CD4-positive, alpha-beta T cell (primary cell): ENCODE measurements at regions of chr9 and their contacts with region 1.

Region 1: GRCh38 chr9:130107234-130107861 is 53.6 kb downstream of the GPR107 start:
- DNase-seq: peak; percentile 71 to 92 (median 84)
- ATAC-seq: peak; percentile 90
- H3K4me3 ChIP-seq: no peak overlapping the region
- H3K4me3 Mint-ChIP-seq: no peak overlapping the region
- H3K27ac ChIP-seq: no peak overlapping the region
- H3K27ac Mint-ChIP-seq: peak overlapping the region; percentile 7
- H3K4me1 ChIP-seq: peaks cover 10% of the 10 kb centered on the region
- H3K4me1 Mint-ChIP-seq: peaks cover 19% of the 10 kb centered on the region
- H3K27me3 ChIP-seq: no peaks in the 10 kb centered on the region
- H3K27me3 Mint-ChIP-seq: no peaks in the 10 kb centered on the region
- CTCF ChIP-seq: peak; percentile 89

Region 2: DNA sequence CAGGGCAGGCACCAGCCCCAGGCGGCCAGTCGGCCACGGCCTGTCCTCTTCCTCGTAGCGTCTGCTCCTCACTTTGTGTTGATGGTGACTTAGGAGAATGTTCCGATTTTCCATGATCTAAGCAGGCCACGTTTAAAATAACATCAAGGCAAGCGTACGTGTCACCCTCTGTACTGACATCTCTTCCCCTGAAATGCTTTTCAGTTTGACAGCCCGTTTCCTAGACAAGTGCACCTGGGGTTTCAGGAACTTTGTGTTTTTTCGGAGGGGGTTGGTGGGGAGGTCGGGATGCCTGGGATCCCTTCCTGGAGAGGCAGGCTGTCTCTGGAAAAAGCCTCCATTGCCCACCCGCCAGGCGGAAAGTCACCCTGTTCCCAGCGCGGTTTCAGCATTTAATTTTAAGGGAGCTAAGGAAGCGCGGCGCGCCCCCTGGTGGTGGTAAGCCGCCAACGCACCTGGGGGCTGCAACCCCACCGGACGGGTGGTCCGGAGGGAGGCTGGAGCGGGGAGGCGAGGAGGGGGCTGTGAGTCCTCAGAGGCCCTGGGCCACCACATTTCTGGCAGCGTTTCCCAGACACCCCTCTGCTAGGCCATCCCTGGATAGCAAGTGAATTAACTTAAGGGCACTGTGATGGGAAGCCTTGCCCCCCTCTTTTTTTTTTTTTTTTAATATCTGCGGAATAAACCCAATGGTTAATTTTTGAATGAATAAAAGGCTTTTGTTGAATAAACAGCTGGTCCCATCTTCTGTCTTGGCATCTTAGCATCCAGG is 128.7 kb after region 1 on chr9:
- CTCF ChIA-PET with region 1: interaction called, 52 read pairs
- POLR2A ChIA-PET with region 1: no interaction called
- intact Hi-C with region 1: loop called (anchors 1 kb)
- DNase-seq: peak; percentile 52 to 82 (median 64)
- ATAC-seq: peak; percentile 40
- H3K4me3 ChIP-seq: no peak overlapping the region
- H3K4me3 Mint-ChIP-seq: peak overlapping the region; percentile 34
- H3K27ac ChIP-seq: no peak overlapping the region
- H3K27ac Mint-ChIP-seq: no peak overlapping the region
- H3K4me1 ChIP-seq: peaks cover 30% of the 10 kb centered on the region
- H3K4me1 Mint-ChIP-seq: peaks cover 22% of the 10 kb centered on the region
- H3K27me3 ChIP-seq: no peaks in the 10 kb centered on the region
- H3K27me3 Mint-ChIP-seq: no peaks in the 10 kb centered on the region
- CTCF ChIP-seq: peak; percentile 98

Region 3: DNA sequence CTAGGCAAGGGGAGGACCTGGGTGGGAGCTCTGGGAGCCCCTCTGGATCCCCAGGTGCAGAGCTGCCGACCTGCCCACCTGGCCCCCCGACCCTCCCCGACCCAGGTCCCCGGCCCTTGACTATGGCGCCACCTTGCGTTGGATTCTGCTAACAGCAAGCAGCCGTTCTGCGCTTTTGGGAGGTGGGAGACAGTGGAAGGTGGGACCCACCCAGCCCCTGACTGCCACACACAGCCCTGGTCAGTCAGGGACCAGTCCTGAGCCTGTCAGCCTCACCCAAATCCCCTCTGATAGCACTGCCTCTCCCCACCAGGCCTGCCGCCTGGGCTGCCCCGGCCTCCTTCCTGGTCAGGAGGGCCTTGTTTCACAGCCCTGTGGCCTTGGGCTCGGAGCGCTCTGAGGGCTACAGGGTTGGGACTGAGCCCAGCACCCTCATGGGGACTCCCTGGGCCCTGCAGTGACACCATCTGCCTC is 236.1 kb after region 1 on chr9:
- CTCF ChIA-PET with region 1: no interaction called
- POLR2A ChIA-PET with region 1: no interaction called
- intact Hi-C with region 1: loop called (anchors 5 kb)
- DNase-seq: peak in 11 of 14 experiments; percentile 3 to 46 (median 13)
- ATAC-seq: no peak
- H3K4me3 ChIP-seq: no peak overlapping the region
- H3K4me3 Mint-ChIP-seq: no peak overlapping the region
- H3K27ac ChIP-seq: no peak overlapping the region
- H3K27ac Mint-ChIP-seq: no peak overlapping the region
- H3K4me1 ChIP-seq: no peaks in the 10 kb centered on the region
- H3K4me1 Mint-ChIP-seq: no peaks in the 10 kb centered on the region
- H3K27me3 ChIP-seq: peaks cover 4 to 6% of the 10 kb centered on the region in 2 experiments
- H3K27me3 Mint-ChIP-seq: no peaks in the 10 kb centered on the region
- CTCF ChIP-seq: peak; percentile 29

Region 4: GRCh38 chr9:131645078-131645776 is 1537.9 kb after region 1 on chr9:
- CTCF ChIA-PET with region 1: no interaction called
- POLR2A ChIA-PET with region 1: no interaction called
- intact Hi-C with region 1: no loop called
- DNase-seq: peak in 1 of 14 experiments; percentile 39
- ATAC-seq: peak; percentile 21
- H3K4me3 ChIP-seq: no peak overlapping the region
- H3K4me3 Mint-ChIP-seq: no peak overlapping the region
- H3K27ac ChIP-seq: no peak overlapping the region
- H3K27ac Mint-ChIP-seq: peak overlapping the region; percentile 72
- H3K4me1 ChIP-seq: peaks cover 33% of the 10 kb centered on the region
- H3K4me1 Mint-ChIP-seq: peaks cover 20% of the 10 kb centered on the region
- H3K27me3 ChIP-seq: no peaks in the 10 kb centered on the region
- H3K27me3 Mint-ChIP-seq: no peaks in the 10 kb centered on the region
- CTCF ChIP-seq: no peak